ENCODE measurements at regions of chr10 and their contacts with region 1.

Region 1: GRCh38 chr10:26881600-26882331 is 21.0 kb upstream of the ABI1 start:
- DNase-seq: peak; percentile 62
- CTCF ChIP-seq: peak; percentile 68

Region 2: DNA sequence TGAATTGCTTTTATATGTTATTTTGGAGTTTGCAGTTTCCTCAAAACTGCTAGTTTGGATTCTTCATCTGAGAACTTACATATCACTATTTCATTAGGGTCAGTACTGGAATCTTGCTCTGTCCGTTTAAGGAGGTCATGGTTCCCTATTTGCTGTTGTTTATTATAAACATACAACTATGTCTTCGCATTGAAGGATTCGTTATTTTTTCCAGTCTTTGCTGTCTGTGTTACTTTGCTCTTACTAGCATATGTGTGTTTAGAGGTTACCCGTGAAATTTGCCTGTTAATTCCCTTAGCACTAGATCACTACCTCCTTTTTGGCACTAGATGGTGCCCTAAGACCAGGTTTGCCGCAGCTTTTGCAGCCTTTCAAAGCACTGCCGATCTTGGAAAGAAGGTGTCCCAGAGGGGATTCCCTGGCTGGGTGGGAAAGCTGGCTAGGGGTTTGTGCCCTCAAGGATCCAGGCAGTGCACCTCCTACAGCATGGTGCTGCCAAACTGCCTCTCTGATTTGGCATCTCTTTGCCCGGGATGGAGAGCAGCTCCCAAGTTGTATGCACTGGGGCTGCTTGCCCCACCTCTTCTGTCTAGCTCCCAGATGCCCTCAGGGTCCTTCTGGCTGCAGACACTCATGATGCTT is 546.7 kb before region 1 on chr10:
- CTCF ChIA-PET with region 1: interaction called, 13 read pairs
- POLR2A ChIA-PET with region 1: no interaction called
- DNase-seq: peak; percentile 67
- CTCF ChIP-seq: peak; percentile 77

Region 3: DNA sequence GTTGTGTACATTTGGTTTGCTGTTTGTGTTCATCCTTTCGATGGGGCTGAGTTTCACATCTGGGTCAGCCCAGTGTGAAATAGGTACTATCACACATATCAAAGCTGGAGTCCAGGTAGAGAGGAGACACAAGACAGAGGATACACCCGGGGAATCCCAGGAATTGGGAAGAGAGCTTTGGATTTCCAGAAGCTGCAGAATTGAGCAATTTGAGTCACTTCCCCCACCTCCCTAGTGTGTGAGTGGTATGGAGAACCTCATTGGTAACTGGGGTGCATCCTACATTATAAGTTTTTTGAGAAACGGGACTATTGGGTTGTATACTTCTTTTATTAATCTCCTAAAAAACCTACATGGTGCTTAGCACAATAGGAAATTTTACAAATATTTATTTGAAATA is 196.3 kb before region 1 on chr10:
- CTCF ChIA-PET with region 1: interaction called, 11 read pairs
- POLR2A ChIA-PET with region 1: no interaction called
- DNase-seq: no peak
- CTCF ChIP-seq: no peak

Region 4: DNA sequence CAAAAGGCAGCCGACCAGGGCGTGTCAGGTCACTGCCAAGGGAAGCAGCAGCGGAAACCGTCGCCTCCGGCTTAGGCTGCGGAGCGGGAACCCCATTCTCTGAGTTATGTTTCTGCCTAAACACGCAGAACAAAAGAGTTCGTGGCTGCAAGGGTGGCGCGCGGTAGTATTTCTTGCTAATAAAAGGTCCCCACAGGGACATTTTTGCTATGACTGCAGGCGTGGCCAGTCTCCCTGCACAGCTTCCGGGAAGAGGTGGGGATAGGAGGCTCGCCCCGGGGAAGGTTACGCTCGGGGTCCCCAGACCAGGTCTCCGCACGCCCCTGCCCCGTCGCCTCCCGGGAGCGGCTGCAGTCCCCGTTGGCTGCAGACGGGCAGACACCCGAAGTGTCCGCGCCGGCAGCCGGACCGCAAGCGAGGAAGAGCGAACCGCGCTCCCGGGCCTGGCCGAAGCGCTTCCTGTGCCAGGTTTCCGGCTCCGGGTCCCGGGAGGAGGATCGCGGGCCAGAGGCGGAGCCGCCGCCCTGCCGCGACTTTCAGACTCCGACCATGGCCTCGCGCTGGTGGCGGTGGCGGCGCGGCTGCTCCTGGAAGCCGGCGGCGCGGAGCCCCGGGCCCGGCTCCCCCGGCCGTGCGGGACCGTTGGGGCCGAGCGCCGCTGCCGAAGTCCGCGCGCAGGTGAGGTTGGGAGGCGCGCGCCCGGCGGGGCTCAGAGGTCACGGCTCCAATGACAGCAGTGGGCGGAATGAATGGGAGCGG is 184.4 kb before region 1 on chr10 and contains the start of gene PDSS1:
- CTCF ChIA-PET with region 1: interaction called, 11 read pairs
- POLR2A ChIA-PET with region 1: no interaction called
- DNase-seq: peak; percentile 91
- CTCF ChIP-seq: no peak

Region 5: DNA sequence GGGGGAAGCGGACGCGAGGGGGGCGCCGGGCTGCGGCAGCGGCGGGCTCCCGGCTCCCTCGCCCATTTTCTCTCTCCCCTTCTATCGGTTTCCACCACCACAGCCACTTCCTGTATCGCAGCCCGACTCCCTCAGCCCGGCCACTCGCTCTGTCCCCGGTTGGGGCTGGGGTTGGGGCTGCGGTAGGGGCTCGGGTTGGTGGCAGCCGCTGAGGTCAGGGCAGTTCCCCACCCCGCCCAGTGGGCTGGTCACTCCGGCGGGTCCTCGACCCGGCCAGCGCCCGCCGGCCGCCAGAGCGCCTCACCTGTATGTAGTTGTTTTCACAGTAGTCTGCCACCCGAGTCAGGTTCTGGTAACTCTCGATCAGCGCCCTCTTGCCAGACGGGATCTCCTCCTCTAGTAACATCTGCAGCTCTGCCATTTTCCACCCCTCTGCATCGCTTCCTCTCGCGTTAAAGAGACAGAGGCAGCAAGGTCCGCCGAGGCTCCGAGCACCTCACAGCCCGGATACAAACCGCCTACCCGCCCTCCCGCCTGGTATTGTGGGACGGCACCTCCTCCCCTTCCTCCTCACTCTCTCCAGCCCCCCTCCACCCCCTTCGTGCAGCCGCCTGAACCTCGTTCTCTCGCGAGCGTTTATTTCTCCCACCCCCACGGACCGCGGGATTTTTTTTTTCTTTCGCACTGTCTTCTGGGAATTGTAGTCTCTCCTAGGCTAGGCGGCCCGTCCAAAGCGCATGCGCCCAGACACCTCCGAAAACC is 21.1 kb before region 1 on chr10 and contains the start of gene ABI1:
- CTCF ChIA-PET with region 1: interaction called, 11 read pairs
- POLR2A ChIA-PET with region 1: no interaction called
- DNase-seq: peak; percentile 96
- CTCF ChIP-seq: no peak

Region 6: GRCh38 chr10:26869528-26869927 is 12.2 kb before region 1 on chr10:
- CTCF ChIA-PET with region 1: interaction called, 13 read pairs
- POLR2A ChIA-PET with region 1: no interaction called
- DNase-seq: no peak
- CTCF ChIP-seq: no peak

Measured in GM10248 (cell line).